Activated CD4-positive, alpha-beta memory T cell treated with anti-CD3 and anti-CD28 coated beads for 36 hours (primary cell): ENCODE measurements at regions of chr1 and their contacts with region 1.

Region 1: DNA sequence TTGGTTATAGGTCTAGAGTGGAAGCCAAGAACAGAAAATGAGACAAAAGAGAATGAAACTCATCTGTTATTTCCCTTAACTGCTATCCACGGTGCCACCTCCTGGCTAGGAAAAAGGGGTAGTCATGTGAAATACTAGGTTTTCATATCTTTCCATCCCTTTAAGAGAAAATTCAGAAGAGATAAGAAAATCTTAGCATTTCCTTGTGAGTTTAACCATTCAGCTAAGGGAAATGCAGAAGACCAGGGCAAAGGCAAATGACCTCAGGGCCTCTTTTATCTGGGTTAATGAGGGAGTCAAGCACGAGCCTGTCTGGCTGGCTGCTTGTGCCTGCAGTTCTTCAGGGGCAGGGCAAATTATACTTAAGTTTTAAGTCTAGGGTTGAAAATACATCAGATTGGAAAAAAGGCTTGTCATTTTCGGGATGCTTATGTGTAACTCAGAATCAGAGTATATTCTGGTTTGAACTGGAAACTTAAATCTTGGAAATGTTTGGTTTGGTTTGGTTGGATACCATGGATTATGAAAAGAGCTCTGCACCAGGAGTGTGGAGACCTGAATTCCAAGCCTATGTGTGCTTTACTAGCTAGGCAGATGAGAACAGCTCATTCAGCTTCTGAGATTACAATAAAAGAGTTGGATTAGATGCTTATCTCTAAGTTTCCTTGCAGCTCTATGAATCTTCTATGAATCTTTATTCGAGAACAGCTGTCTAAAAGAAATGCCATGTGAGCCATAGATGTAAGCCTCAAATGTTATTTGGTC is 19.9 kb downstream of the NIBAN1 start:
- DNase-seq: no peak
- H3K4me3 Mint-ChIP-seq: peak overlapping the region; percentile 40
- H3K27ac Mint-ChIP-seq: peak overlapping the region; percentile 74
- H3K4me1 Mint-ChIP-seq: peaks cover 29% of the 10 kb centered on the region
- H3K27me3 Mint-ChIP-seq: no peaks in the 10 kb centered on the region

Region 2: GRCh38 chr1:184881941-184882913 is 72.2 kb before region 1 on chr1:
- CTCF ChIA-PET with region 1: interaction called, 3 read pairs
- POLR2A ChIA-PET with region 1: no interaction called
- intact Hi-C with region 1: loop called (anchors 1 kb)
- DNase-seq: peak; percentile 48
- H3K4me3 Mint-ChIP-seq: peak overlapping the region; percentile 13
- H3K27ac Mint-ChIP-seq: peak overlapping the region; percentile 92
- H3K4me1 Mint-ChIP-seq: peaks cover 33% of the 10 kb centered on the region
- H3K27me3 Mint-ChIP-seq: peaks cover 2% of the 10 kb centered on the region

Region 3: GRCh38 chr1:184929711-184930631 is 24.4 kb before region 1 on chr1:
- CTCF ChIA-PET with region 1: interaction called, 4 read pairs
- POLR2A ChIA-PET with region 1: no interaction called
- intact Hi-C with region 1: loop called (anchors 2 kb)
- DNase-seq: no peak
- H3K4me3 Mint-ChIP-seq: no peak overlapping the region
- H3K27ac Mint-ChIP-seq: no peak overlapping the region
- H3K4me1 Mint-ChIP-seq: peaks cover 11% of the 10 kb centered on the region
- H3K27me3 Mint-ChIP-seq: no peaks in the 10 kb centered on the region

Region 4: GRCh38 chr1:184973272-184974055 is 19.1 kb after region 1 on chr1:
- CTCF ChIA-PET with region 1: interaction called, 4 read pairs
- POLR2A ChIA-PET with region 1: interaction called, 15 read pairs
- intact Hi-C with region 1: loop called (anchors 1 kb)
- DNase-seq: peak; percentile 86
- H3K4me3 Mint-ChIP-seq: peak overlapping the region; percentile 94
- H3K27ac Mint-ChIP-seq: peak overlapping the region; percentile 96
- H3K4me1 Mint-ChIP-seq: peaks cover 53% of the 10 kb centered on the region
- H3K27me3 Mint-ChIP-seq: peaks cover 6% of the 10 kb centered on the region

Region 5: DNA sequence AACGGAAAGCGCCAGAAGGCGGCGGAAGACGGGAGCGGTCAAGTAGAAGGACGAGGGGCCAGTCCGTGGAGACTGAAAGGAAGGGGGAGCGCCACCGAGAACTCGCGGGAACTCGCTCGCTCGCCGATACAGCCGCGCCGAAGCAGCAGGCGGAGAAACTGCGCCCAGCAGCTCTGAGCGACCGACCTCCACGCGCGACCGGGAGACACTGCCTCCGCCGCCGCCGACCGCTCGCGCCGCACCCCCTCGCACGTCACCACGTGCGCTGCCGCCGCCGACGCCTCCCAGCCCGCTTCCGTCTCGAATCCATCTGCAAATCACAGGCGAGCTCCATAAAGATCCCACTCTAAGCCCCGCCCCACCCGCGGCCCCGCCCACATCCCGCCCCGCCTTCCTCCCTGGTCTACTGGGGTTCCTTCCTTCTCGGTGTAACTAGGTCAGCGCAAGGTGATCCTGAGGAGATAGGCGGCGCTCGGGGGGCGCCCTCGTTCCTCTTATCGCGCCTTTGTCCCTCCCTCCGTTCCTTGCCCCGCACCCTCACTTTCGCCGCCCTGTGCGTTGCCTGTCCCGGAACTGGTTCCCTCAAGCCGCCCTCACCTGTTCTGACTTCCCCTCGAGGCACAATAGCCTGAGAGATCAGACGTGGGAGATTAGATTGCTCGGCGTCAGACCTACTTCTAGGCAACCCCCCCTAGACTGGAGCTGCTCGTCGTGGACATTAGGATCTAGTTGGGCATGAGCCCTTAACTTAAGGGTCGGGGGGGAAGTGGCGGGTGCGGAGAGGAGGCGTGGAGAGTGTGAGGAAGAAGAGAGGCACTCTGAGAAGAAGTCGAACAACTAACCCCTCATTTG is 362.8 kb after region 1 on chr1 and contains the start of gene IVNS1ABP:
- CTCF ChIA-PET with region 1: no interaction called
- POLR2A ChIA-PET with region 1: no interaction called
- intact Hi-C with region 1: no loop called
- DNase-seq: peak; percentile 98
- H3K4me3 Mint-ChIP-seq: peak within 1 kb of the TSS; percentile 92
- H3K27ac Mint-ChIP-seq: peak within 1 kb of the TSS; percentile 99
- H3K4me1 Mint-ChIP-seq: peaks cover 49% of the 10 kb centered on the region
- H3K27me3 Mint-ChIP-seq: no peaks in the 10 kb centered on the region
- total RNA-seq, gene IVNS1ABP: 133 to 134 TPM